ENCODE measurements at regions of chr9 and their contacts with region 1.

Region 1: DNA sequence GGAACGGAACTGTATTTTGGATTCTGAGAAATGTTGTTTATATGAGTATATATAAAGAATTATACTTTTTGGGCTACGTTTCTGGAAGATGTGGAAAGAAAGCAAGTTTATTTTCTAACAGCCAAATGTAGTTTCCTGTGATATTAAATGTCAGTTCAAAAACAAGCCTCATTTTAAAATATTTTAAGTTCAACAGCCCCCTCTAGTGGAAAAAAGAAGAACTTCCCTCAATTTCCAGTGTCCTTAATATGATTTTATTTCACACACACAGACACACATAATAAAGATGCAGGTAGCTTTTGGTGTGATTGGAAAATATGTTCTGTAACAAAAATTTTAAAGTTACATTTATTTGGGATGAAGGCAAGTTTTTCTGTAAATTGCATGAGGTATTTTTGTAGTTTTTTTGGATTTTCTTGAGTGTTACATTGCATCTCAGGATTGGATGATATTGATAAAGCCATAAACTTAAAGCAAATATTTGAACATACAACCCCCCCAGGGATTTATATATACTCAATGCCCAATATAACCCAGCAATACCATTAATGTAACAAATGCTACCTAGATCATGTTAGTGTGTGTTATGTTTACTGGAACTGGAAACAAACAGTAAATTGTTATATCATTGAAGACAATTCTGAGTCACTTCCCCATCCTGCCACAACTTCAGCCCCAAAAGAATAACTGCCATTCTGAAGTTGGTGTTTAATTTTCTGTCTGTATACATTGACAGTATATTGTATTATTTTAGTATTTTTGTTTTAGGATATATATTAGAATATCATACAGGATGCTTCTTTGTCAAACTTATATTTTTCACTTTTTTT is 54.0 kb downstream of the CCDC171 start:
- DNase-seq: peak in 4 of 5 donors; percentile 54 to 66 (median 60)
- H3K4me3 ChIP-seq: no peak overlapping the region
- H3K4me3 Mint-ChIP-seq: no peak overlapping the region
- H3K27ac ChIP-seq: no peak overlapping the region
- H3K27ac Mint-ChIP-seq: no peak overlapping the region
- H3K4me1 ChIP-seq: no peaks in the 10 kb centered on the region
- H3K4me1 Mint-ChIP-seq: no peaks in the 10 kb centered on the region
- H3K27me3 ChIP-seq: no peaks in the 10 kb centered on the region
- H3K27me3 Mint-ChIP-seq: no peaks in the 10 kb centered on the region

Region 2: GRCh38 chr9:15104826-15105420 is 501.9 kb before region 1 on chr9:
- CTCF ChIA-PET with region 1: interaction called, 3 read pairs
- POLR2A ChIA-PET with region 1: no interaction called
- intact Hi-C with region 1: loop called (anchors 1 kb)
- DNase-seq: peak in 4 of 5 donors; percentile 46 to 52 (median 50)
- H3K4me3 ChIP-seq: no peak overlapping the region
- H3K4me3 Mint-ChIP-seq: peak overlapping the region in 1 of 8 donors; percentile 22
- H3K27ac ChIP-seq: no peak overlapping the region
- H3K27ac Mint-ChIP-seq: no peak overlapping the region
- H3K4me1 ChIP-seq: no peaks in the 10 kb centered on the region
- H3K4me1 Mint-ChIP-seq: no peaks in the 10 kb centered on the region
- H3K27me3 ChIP-seq: no peaks in the 10 kb centered on the region
- H3K27me3 Mint-ChIP-seq: peaks cover 8 to 11% of the 10 kb centered on the region in 2 donors

Region 3: DNA sequence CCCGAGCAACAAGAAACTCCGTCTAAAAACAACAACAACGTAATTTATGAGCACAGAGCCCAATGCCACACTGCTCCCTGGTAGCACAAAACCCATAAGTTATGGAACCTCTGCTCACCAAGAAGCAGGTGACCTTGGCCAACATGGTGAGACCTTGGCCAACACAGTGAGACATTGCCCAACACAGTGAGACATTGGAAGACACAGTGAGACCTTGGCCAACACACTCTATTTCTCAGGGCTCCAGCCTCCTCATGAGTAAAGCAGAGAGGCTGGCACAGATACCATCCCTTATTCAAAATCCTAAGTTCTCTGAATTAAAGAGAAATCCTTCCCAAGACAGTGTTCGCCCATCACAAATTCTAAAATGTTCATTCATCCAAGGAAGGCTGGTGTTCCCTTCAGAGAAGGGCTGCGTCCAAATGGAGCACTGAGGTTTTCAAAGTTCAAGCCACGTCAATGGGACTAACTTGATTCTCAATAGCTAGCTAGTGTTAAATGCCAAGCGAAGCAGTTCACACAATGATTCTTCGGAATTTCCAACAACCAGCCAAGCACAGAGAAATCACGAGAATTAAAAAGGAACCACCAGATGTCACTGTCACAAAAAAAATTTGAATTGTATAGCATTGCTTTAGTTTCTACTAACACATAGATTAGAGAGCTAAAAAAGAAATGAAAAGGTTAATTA is 329.3 kb before region 1 on chr9:
- CTCF ChIA-PET with region 1: interaction called, 6 read pairs
- POLR2A ChIA-PET with region 1: no interaction called
- intact Hi-C with region 1: loop called (anchors 1 kb)
- DNase-seq: peak in 2 of 5 donors; percentile 27 to 37
- H3K4me3 ChIP-seq: no peak overlapping the region
- H3K4me3 Mint-ChIP-seq: no peak overlapping the region
- H3K27ac ChIP-seq: no peak overlapping the region
- H3K27ac Mint-ChIP-seq: peak overlapping the region in 3 of 7 donors; percentile 2 to 55 (median 48)
- H3K4me1 ChIP-seq: peaks cover 9% of the 10 kb centered on the region
- H3K4me1 Mint-ChIP-seq: peaks cover 26 to 52% (median 32%) of the 10 kb centered on the region in 4 donors
- H3K27me3 ChIP-seq: no peaks in the 10 kb centered on the region
- H3K27me3 Mint-ChIP-seq: no peaks in the 10 kb centered on the region

Region 4: DNA sequence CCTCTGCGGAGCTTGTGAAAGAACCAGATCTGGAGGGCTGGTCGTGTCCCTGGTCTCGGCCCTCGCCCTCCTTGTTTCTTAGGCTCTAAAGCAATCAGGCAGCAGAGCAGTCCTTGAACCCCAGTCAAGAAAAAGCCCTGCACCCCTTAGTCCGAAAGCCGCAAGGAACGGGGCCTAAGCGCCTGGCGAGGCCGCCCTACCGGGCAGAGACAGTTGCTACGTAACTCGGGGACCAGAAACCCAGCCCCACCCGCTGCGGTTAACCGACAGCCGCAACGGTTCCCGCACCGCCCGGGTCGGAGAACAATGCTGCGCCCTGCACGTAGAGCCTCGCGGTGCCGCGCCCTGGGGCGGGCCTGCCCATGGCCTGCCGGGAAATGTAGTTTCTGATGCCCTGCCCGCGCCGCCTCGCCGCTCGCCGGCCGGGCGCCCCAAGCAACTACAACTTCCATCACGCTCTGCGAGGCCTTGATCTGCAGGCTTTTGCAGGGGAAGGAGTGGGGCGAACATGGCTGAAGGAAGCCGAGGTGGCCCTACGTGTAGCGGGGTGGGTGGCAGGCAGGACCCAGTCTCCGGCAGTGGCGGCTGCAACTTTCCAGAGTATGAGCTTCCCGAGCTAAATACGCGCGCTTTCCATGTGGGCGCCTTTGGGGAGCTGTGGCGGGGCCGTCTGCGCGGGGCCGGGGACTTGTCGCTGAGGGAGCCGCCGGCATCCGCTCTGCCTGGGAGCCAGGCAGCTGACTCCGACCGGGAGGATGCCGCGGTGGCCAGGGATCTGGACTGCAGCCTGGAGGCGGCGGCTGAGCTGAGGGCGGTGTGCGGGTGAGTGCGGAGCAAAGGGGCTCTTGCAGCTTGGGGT is 184.3 kb before region 1 on chr9 and contains the start of gene SNAPC3:
- CTCF ChIA-PET with region 1: interaction called, 6 read pairs
- POLR2A ChIA-PET with region 1: no interaction called
- intact Hi-C with region 1: loop called (anchors 2 kb)
- DNase-seq: peak; percentile 92 to 94 (median 94)
- H3K4me3 ChIP-seq: peak within 1 kb of the TSS; percentile 72 to 98
- H3K4me3 Mint-ChIP-seq: peak within 1 kb of the TSS; percentile 88 to 95 (median 93)
- H3K27ac ChIP-seq: peak within 1 kb of the TSS; percentile 62
- H3K27ac Mint-ChIP-seq: peak within 1 kb of the TSS; percentile 91 to 98 (median 95)
- H3K4me1 ChIP-seq: peaks cover 45% of the 10 kb centered on the region
- H3K4me1 Mint-ChIP-seq: peaks cover 22 to 43% (median 32%) of the 10 kb centered on the region in 4 donors
- H3K27me3 ChIP-seq: no peaks in the 10 kb centered on the region
- H3K27me3 Mint-ChIP-seq: no peaks in the 10 kb centered on the region
- total RNA-seq, gene SNAPC3: 33.3 to 34.2 TPM

Region 5: GRCh38 chr9:15552636-15553527 is 54.0 kb before region 1 on chr9 and contains the start of gene CCDC171:
- CTCF ChIA-PET with region 1: interaction called, 8 read pairs
- POLR2A ChIA-PET with region 1: no interaction called
- intact Hi-C with region 1: loop called (anchors 1 kb)
- DNase-seq: peak; percentile 85 to 90 (median 87)
- H3K4me3 ChIP-seq: peak within 1 kb of the TSS; percentile 79 to 93
- H3K4me3 Mint-ChIP-seq: peak within 1 kb of the TSS; percentile 87 to 97 (median 96)
- H3K27ac ChIP-seq: peak within 1 kb of the TSS; percentile 45
- H3K27ac Mint-ChIP-seq: peak within 1 kb of the TSS; percentile 69 to 91 (median 87)
- H3K4me1 ChIP-seq: peaks cover 18% of the 10 kb centered on the region
- H3K4me1 Mint-ChIP-seq: peaks cover 4 to 22% (median 10%) of the 10 kb centered on the region in 4 donors
- H3K27me3 ChIP-seq: no peaks in the 10 kb centered on the region
- H3K27me3 Mint-ChIP-seq: no peaks in the 10 kb centered on the region
- total RNA-seq, gene CCDC171: 1.8 to 1.9 TPM

Region 6: GRCh38 chr9:15642369-15642962 is 35.6 kb after region 1 on chr9:
- CTCF ChIA-PET with region 1: no interaction called
- POLR2A ChIA-PET with region 1: no interaction called
- intact Hi-C with region 1: no loop called
- DNase-seq: peak in 4 of 5 donors; percentile 6 to 15 (median 12)
- H3K4me3 ChIP-seq: no peak overlapping the region
- H3K4me3 Mint-ChIP-seq: no peak overlapping the region
- H3K27ac ChIP-seq: no peak overlapping the region
- H3K27ac Mint-ChIP-seq: no peak overlapping the region
- H3K4me1 ChIP-seq: no peaks in the 10 kb centered on the region
- H3K4me1 Mint-ChIP-seq: peaks cover 0 to 1% (median 0%) of the 10 kb centered on the region in 4 donors
- H3K27me3 ChIP-seq: no peaks in the 10 kb centered on the region
- H3K27me3 Mint-ChIP-seq: peaks cover 2 to 3% of the 10 kb centered on the region in 2 donors

Measured in CD4-positive, alpha-beta memory T cell (primary cell).